Activated CD4-positive, alpha-beta memory T cell treated with anti-CD3 and anti-CD28 coated beads for 36 hours (primary cell): ENCODE measurements at regions of chr11 and their contacts with region 1.

Region 1: DNA sequence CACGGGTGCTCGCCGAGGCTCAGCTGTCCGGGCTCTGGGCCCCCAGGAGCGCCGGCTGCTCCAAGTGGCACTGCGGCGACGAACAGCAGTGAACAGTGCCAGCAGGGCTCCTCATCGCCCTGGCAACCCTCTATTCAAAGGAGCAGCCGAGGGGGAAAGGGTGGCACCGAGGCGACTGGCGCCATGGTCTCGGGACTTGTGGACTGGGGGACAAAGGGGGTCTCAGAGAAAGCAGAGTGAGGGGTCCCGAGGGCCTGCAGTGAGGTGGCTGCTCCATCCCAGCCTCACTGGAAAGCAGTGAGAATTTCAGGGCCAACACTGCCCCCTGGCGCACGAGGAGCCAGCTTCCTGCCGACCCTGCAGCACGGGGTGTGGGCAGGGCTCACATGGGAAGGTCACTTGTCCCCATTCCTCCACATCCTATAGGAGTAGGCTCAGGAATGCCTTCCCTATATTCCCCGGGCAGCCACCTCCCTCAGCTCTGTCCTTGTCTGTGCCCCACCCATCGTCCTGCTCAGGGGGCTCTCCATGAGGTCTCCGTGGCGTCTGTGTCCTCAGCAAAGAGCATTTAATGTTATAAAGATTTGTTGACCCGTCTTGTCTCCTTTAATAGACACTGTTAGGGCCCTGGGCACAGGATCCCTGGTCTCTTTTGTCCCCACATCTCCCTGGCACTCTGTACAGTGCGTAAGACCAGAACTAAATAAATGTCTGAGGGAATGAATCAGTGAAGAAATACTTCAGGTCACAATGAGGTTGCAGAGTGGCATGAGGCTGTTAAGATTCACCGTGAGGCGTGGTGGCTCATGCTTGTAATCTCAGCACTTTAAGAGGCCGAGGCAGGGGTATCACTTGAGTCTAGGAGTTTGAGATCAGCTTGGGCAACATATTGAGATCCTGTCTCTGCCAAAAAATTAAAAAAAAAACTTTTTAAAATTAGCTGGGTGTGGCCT is 26.4 kb downstream of the LRFN4 start:
- DNase-seq: peak; percentile 78
- H3K4me3 Mint-ChIP-seq: no peak overlapping the region
- H3K27ac Mint-ChIP-seq: no peak overlapping the region
- H3K4me1 Mint-ChIP-seq: peaks cover 15% of the 10 kb centered on the region
- H3K27me3 Mint-ChIP-seq: no peaks in the 10 kb centered on the region

Region 2: DNA sequence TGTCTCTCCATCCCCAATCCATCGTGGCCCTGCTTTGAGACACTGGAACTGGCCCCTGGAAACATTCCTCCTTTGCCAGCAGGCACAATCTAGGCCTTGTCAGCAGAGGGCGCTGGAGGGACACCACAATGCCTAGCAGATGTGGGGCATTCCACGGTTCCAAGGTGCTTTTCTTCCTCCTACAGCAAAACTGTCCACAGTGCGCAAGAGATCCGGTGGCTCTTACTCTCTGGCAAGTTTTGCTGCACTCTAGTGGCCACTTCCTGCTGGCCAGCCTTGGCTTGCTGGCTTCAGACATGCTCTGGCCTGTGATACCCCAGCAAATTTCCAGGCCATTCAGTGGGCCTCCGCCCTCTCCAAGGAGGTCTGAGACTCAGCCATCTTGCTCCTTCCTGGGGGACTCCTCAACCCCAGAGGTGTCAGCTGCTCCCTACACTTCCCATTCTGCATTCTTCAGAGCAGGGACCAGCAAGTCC is 188.5 kb before region 1 on chr11:
- CTCF ChIA-PET with region 1: interaction called, 29 read pairs
- POLR2A ChIA-PET with region 1: no interaction called
- intact Hi-C with region 1: loop called (anchors 1 kb)
- DNase-seq: peak; percentile 91
- H3K4me3 Mint-ChIP-seq: no peak overlapping the region
- H3K27ac Mint-ChIP-seq: no peak overlapping the region
- H3K4me1 Mint-ChIP-seq: no peaks in the 10 kb centered on the region
- H3K27me3 Mint-ChIP-seq: no peaks in the 10 kb centered on the region